ENCODE measurements at regions of chr12 and their contacts with region 1.

Region 1: DNA sequence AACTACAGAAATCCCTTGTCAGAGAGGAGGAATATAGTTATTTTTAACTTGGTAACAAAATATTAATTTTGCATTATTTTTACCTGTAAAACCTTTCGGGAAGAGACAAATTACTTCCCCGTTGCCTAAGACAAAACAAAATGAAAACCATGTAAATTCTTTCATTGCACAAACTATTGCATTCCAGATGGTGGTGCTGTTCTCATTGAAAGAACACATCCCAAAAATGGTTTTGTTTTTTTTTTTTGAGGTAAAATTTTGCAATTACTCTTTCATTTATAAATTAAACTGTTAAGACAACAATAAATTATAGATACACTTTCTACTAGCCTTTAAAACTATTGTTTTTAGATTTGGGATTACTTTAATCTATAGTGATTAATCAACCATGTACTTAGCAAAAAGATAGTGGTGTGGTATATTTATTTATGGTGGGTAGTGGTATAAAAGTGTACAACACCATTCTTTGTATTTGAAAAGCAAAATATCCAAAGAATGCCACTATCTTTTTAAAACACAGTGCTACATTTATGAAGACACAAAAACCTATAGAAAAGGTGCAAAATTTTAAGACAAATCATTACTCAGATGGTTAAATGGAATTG is 115.5 kb downstream of the SLC38A1 start:
- DNase-seq: peak; percentile 37
- H3K4me3 ChIP-seq: no peak overlapping the region
- H3K27ac ChIP-seq: peak overlapping the region; percentile 28
- H3K4me1 ChIP-seq: peaks cover 23% of the 10 kb centered on the region
- H3K27me3 ChIP-seq: no peaks in the 10 kb centered on the region
- CTCF ChIP-seq: peak; percentile 38 to 40
- POLR2A ChIP-seq: no peak

Region 2: DNA sequence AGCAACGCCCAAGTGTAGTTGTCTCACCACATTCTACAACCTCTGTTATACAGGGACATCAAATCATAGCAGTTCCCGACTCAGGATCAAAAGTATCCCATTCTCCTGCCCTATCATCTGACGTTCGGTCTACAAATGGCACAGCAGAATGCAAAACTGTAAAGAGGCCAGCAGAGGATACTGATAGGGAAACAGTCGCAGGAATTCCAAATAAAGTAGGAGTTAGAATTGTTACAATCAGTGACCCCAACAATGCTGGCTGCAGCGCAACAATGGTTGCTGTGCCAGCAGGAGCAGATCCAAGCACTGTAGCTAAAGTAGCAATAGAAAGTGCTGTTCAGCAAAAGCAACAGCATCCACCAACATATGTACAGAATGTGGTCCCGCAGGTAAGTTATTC is 300.9 kb before region 1 on chr12:
- CTCF ChIA-PET with region 1: no interaction called
- POLR2A ChIA-PET with region 1: no interaction called
- dilution Hi-C with region 1: no loop called
- intact Hi-C with region 1: no loop called
- DNase-seq: no peak
- H3K4me3 ChIP-seq: no peak overlapping the region
- H3K27ac ChIP-seq: no peak overlapping the region
- H3K4me1 ChIP-seq: no peaks in the 10 kb centered on the region
- H3K27me3 ChIP-seq: no peaks in the 10 kb centered on the region
- CTCF ChIP-seq: no peak
- POLR2A ChIP-seq: no peak

Region 3: DNA sequence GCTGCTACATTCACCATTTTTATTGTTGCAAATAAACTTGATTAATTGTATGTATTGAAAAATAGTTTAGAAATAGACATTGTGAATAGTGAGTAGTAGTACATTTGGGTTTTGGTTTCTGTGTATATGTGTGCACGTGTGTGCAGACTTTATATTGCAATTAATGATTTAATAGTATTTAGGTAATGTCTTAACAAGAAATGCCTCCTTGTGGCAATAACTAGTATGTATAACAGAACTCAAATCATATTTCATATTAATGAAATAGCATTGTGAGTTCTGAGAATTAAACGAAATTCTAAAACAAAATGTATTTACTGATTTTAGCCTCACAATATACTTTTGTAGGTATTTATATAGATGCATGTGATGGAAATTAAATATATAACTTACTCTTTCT is 263.1 kb before region 1 on chr12:
- CTCF ChIA-PET with region 1: no interaction called
- POLR2A ChIA-PET with region 1: no interaction called
- dilution Hi-C with region 1: no loop called
- intact Hi-C with region 1: no loop called
- DNase-seq: no peak
- H3K4me3 ChIP-seq: no peak overlapping the region
- H3K27ac ChIP-seq: no peak overlapping the region
- H3K4me1 ChIP-seq: no peaks in the 10 kb centered on the region
- H3K27me3 ChIP-seq: no peaks in the 10 kb centered on the region
- CTCF ChIP-seq: no peak
- POLR2A ChIP-seq: no peak

Region 4: DNA sequence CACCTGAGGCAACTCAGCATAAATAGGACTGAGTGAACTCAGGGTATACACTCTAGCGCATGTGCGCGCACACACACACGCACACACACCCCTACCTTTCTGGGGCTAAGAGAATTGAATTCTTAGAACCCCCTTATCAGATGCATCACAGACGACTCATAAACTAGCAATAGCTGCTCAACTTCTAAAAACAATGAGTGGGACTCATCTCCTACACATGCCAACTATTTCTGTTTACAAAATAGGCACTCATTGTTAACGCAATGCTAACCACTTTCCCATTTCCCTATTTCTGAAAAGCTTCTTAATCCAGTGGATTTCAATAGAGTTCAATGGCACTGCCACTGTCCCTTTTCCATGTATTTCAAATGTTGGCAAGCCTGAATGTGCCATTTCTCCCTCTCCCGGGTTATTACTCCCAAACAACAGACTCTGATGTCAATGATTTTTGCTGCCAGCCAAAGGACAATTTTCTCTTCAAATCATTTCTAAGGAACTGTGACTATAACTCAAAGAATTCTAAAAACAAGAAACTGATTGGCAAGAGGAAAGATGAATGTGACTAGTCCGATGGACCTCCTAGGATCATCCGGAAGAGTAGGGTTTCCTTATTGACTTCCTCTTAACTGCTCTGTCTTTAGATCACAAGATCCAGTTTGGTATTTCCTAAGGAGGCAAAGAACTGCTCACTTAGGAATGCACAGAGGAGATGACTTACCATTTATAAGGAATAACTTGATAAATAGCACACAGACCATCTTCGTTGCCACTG is 66.7 kb after region 1 on chr12:
- CTCF ChIA-PET with region 1: no interaction called
- POLR2A ChIA-PET with region 1: no interaction called
- dilution Hi-C with region 1: no loop called
- intact Hi-C with region 1: loop called (anchors 2 kb)
- DNase-seq: peak; percentile 82
- H3K4me3 ChIP-seq: peak overlapping the region in 1 of 3 experiments; percentile 37
- H3K27ac ChIP-seq: peak overlapping the region; percentile 97
- H3K4me1 ChIP-seq: peaks cover 49% of the 10 kb centered on the region
- H3K27me3 ChIP-seq: no peaks in the 10 kb centered on the region
- CTCF ChIP-seq: no peak
- POLR2A ChIP-seq: no peak

Region 5: DNA sequence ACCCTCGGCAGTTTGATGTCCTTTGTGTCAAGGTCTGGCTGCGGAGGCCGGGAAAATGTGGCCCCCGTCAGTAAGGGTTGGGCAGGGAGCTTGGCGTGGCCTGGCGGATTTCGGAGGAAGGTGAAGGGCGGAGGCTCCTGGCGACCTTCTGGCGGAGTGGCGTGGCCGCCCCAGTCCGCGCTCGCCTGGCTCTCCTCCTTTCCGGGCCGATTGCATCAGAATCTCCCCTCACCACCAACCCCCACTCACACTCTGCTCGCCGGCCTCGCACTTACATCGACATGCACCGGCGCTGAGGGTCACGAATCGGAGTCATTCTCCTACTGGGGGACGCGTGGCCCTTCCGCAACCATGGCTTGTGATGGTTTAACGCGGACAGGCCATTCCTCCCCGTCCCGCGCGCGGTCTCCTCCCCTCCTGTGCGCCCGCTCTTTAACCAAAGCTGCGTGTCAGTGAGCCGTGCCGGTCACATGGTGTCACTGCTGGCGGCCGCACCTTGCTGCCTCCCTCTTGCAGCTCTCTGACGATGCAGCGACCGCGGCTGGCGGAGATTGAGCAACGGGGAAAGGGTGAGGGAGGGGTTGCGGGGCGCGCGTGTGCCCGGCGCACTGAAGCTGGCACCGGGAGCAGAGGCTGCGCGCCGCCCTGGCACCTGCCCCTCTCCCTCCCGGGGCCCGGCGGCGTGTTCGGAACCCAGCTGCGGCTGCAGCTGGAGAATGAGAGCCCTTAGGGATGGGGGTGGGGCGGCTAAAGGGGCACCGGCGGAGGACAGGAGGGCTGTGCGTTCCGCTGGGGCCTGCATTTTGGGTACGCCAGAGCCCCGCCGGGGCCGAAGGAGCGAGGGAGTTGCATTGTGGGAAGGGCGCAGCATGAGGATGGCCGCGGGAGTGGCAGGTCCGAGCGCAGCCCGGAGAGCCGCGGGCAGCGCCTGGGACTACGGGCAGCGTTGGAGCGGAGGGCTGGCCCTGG is 115.5 kb after region 1 on chr12 and contains the start of gene SLC38A1:
- CTCF ChIA-PET with region 1: interaction called, 3 read pairs
- POLR2A ChIA-PET with region 1: no interaction called
- dilution Hi-C with region 1: no loop called
- intact Hi-C with region 1: loop called (anchors 2 kb)
- DNase-seq: peak; percentile 73
- H3K4me3 ChIP-seq: peak within 1 kb of the TSS; percentile 59 to 85 (median 84)
- H3K27ac ChIP-seq: peak within 1 kb of the TSS; percentile 82
- H3K4me1 ChIP-seq: peaks cover 31% of the 10 kb centered on the region
- H3K27me3 ChIP-seq: no peaks in the 10 kb centered on the region
- CTCF ChIP-seq: no peak
- POLR2A ChIP-seq: peak; percentile 66
- total RNA-seq, gene SLC38A1: 81.0 and 86.4 TPM in 2 replicates

Region 6: DNA sequence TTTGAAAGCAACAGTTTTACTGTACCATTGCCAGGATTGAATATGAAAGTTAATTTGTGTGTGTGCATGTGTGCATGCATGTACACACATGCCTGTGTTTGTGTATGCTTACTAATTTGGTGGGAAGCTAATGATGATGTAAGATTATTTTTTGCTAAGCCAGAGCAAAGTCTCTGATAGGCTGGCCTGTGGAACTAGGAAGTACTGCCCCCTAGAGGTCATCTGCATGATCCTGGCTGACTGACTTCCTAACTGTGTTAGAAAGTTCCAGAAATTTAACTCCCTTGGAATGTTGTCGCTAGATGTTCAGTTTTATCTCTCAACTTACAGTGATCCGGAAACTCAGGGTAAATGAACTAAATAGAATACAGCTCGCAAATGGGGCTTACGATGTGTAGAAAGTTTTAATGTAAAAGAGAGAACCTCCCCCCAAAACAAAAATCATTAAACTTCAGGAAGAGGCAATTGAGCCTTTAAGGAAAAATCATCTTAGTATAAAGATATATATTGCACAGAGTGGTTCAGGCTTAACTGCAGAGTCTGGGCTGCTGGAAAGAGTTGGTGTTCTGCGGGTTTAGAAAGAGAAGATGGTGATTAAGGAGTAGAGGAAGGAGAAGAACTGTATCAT is 149.8 kb after region 1 on chr12:
- CTCF ChIA-PET with region 1: interaction called, 16 read pairs
- POLR2A ChIA-PET with region 1: no interaction called
- dilution Hi-C with region 1: no loop called
- intact Hi-C with region 1: loop called (anchors 1 kb)
- DNase-seq: peak; percentile 35
- H3K4me3 ChIP-seq: no peak overlapping the region
- H3K27ac ChIP-seq: no peak overlapping the region
- H3K4me1 ChIP-seq: no peaks in the 10 kb centered on the region
- H3K27me3 ChIP-seq: peaks cover 3 to 12% of the 10 kb centered on the region in 2 experiments
- CTCF ChIP-seq: peak; percentile 54 to 58
- POLR2A ChIP-seq: no peak

Region 7: DNA sequence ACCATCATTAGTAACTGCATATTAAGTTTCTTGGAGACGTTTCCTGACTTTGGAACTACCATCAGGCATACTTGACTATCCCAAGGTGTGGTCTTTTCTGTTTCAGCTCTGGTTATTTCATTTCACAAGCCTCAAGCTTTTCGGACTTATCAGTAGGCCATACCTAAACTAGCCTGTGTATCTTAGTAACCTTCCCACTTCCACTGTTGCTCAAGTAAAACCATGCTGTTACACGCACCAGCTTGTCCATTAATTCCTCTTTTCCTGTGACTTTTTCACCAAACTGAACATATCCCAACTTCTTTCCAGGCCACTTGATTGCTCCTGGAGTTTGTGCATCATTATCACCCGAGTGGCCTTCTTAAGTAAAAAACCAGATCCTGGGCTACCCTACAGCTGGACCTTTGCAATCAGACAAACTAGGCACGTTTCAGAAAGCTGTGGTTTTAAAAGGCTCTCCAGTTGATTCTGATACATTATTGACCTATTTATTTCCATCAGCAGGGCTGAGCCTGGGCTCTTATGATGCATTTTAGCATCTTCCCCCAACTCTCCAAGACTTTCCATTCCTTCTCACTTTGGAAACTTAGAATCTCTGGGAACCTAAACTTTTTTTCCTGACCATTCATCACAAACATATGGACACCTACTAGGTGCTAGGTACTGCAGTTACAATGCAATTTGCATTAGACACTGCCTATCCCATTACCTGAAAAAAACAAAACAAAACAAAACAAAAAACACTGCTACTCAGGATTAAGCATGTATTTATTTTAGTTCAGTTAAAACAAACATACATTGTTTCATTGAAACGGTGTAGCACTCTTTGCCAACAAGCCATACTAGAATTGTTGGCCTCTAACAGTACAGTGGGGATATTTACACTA is 204.3 kb after region 1 on chr12:
- CTCF ChIA-PET with region 1: interaction called, 3 read pairs
- POLR2A ChIA-PET with region 1: no interaction called
- dilution Hi-C with region 1: no loop called
- intact Hi-C with region 1: loop called (anchors 5 kb)
- DNase-seq: peak; percentile 81
- H3K4me3 ChIP-seq: no peak overlapping the region
- H3K27ac ChIP-seq: no peak overlapping the region
- H3K4me1 ChIP-seq: peaks cover 2% of the 10 kb centered on the region
- H3K27me3 ChIP-seq: no peaks in the 10 kb centered on the region
- CTCF ChIP-seq: no peak
- POLR2A ChIP-seq: peak; percentile 91

Region 8: DNA sequence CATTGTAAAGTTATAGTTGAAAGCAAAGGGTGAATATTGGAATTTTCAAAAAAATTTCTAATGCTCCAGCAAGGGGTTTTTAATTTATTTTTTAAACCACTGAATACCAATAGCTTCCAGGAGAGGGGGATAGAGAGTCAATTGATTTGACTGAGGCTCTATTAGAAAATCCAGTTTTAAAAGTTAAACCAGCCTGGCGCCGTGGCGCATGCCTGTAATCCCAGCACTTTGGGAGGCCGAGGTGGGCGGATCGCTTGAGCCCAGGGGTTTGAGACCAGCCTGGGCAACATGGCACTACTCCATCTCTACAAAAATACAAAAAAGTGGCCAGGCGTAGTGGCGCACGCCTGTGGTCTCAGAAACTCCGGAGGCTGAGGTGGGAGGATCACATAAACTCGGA is 522.4 kb after region 1 on chr12:
- CTCF ChIA-PET with region 1: interaction called, 5 read pairs
- POLR2A ChIA-PET with region 1: no interaction called
- dilution Hi-C with region 1: no loop called
- intact Hi-C with region 1: loop called (anchors 2 kb)
- DNase-seq: peak; percentile 54
- H3K4me3 ChIP-seq: no peak overlapping the region
- H3K27ac ChIP-seq: no peak overlapping the region
- H3K4me1 ChIP-seq: no peaks in the 10 kb centered on the region
- H3K27me3 ChIP-seq: no peaks in the 10 kb centered on the region
- CTCF ChIP-seq: peak; percentile 36 to 44
- POLR2A ChIP-seq: no peak

Region 9: GRCh38 chr12:46933947-46934346 is 780.6 kb after region 1 on chr12:
- CTCF ChIA-PET with region 1: no interaction called
- POLR2A ChIA-PET with region 1: no interaction called
- dilution Hi-C with region 1: no loop called
- intact Hi-C with region 1: loop called (anchors 5 kb)
- DNase-seq: peak; percentile 71
- H3K4me3 ChIP-seq: no peak overlapping the region
- H3K27ac ChIP-seq: no peak overlapping the region
- H3K4me1 ChIP-seq: no peaks in the 10 kb centered on the region
- H3K27me3 ChIP-seq: peaks cover 0 to 2% of the 10 kb centered on the region in 2 experiments
- CTCF ChIP-seq: peak in 1 of 2 donors; percentile 34
- POLR2A ChIP-seq: no peak